K562 (cell line): ENCODE measurements at regions of chr18 and their contacts with region 1.

Region 1: GRCh38 chr18:34611904-34612303 is 98.2 kb upstream of the DTNA start:
- DNase-seq: no peak
- ATAC-seq: no peak
- H3K4me3 ChIP-seq: no peak overlapping the region
- H3K27ac ChIP-seq: no peak overlapping the region
- H3K4me1 ChIP-seq: no peaks in the 10 kb centered on the region
- H3K27me3 ChIP-seq: no peaks in the 10 kb centered on the region
- CTCF ChIP-seq: no peak
- EP300 ChIP-seq: no peak
- POLR2A ChIP-seq: no peak
- RAD21 ChIP-seq: no peak

Region 2: GRCh38 chr18:34509879-34510586 is 101.9 kb before region 1 on chr18:
- CTCF ChIA-PET with region 1: no interaction called
- POLR2A ChIA-PET with region 1: no interaction called
- in situ Hi-C with region 1: loop called (anchors 5 kb)
- intact Hi-C with region 1: no loop called
- DNase-seq: no peak
- ATAC-seq: no peak
- H3K4me3 ChIP-seq: no peak overlapping the region
- H3K27ac ChIP-seq: no peak overlapping the region
- H3K4me1 ChIP-seq: no peaks in the 10 kb centered on the region
- H3K27me3 ChIP-seq: no peaks in the 10 kb centered on the region
- CTCF ChIP-seq: no peak
- EP300 ChIP-seq: no peak
- POLR2A ChIP-seq: no peak
- RAD21 ChIP-seq: no peak